A673 (cell line): ENCODE measurements at regions of chr17 and their contacts with region 1.

Region 1: DNA sequence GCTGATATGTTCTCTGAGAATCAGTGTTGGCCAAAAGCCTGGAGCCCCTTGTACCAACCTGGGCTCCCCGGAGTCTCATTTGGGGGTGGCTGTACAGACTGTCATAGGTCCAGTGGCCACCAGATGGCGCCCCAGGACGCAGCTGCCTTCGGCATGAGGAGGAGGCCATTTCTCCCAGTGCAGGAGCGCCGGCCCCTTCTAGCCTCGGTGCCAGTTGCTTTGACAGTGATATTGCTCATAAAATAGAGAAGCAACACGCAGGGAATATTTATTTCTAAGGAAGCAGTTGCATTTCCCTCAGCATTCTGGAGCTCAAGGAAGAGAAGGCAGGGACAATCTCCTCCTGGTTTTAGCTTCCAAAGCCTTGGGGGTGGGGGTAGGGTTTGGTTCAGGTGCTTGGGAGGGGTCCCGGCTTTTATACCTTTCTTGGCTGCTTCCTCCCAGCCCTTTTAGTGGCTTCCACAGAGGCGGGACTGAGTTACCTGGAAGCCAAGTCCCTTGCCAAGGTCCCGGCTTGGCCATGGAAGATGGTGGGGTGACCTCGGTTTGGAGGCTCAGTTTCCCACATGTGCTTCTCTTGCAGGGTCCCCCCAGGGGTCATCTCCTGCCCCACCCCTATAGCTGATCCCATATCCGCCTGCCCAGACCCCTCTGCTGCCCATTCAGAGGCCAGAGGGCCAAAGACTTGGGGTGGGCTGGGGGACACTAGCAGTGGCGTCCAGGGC is 117.8 kb upstream of the CDC42EP4 start:
- DNase-seq: peak; percentile 87
- H3K4me3 ChIP-seq: no peak overlapping the region
- H3K27ac ChIP-seq: no peak overlapping the region
- H3K4me1 ChIP-seq: peaks cover 15% of the 10 kb centered on the region
- H3K27me3 ChIP-seq: no peaks in the 10 kb centered on the region
- CTCF ChIP-seq: peak; percentile 97

Region 2: DNA sequence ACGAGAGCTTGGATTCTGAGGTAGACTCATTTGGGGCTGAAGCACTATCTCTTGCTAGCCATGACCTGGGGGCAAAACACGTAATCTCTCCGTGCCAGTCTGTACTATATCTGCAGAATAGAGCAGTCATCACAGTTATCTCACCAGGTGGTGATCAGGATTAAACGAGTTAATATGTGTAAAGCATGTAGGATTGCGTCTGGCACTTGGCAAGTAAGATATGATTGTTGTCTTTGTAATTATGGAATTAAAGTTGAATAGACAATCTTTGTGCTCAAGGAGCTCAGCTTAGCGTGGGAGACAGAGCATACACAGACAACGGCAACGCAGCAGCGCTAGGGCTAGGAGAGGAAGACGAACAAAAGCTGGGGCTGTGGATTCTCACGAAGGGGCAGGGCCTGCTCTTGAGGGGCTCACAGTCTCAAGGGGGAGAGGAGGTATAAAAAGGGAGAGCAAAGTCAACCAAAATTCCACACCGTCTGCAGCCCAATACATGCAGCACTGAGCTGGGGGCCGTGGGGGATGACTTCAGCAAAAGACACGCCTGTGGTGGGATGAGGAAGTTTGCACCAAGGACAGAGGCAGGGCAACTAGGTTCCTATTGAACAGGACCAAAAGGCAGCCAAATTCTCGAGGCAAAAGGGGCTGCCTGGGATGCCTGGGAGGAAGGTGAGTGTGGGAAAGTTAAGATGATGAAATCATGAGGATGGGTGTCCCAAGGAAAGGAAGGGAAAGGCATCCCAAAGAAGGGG is 146.0 kb after region 1 on chr17:
- CTCF ChIA-PET with region 1: no interaction called
- POLR2A ChIA-PET with region 1: no interaction called
- intact Hi-C with region 1: loop called (anchors 10 kb)
- DNase-seq: peak; percentile 36
- H3K4me3 ChIP-seq: no peak overlapping the region
- H3K27ac ChIP-seq: no peak overlapping the region
- H3K4me1 ChIP-seq: no peaks in the 10 kb centered on the region
- H3K27me3 ChIP-seq: peaks cover 21% of the 10 kb centered on the region
- CTCF ChIP-seq: no peak

Region 3: DNA sequence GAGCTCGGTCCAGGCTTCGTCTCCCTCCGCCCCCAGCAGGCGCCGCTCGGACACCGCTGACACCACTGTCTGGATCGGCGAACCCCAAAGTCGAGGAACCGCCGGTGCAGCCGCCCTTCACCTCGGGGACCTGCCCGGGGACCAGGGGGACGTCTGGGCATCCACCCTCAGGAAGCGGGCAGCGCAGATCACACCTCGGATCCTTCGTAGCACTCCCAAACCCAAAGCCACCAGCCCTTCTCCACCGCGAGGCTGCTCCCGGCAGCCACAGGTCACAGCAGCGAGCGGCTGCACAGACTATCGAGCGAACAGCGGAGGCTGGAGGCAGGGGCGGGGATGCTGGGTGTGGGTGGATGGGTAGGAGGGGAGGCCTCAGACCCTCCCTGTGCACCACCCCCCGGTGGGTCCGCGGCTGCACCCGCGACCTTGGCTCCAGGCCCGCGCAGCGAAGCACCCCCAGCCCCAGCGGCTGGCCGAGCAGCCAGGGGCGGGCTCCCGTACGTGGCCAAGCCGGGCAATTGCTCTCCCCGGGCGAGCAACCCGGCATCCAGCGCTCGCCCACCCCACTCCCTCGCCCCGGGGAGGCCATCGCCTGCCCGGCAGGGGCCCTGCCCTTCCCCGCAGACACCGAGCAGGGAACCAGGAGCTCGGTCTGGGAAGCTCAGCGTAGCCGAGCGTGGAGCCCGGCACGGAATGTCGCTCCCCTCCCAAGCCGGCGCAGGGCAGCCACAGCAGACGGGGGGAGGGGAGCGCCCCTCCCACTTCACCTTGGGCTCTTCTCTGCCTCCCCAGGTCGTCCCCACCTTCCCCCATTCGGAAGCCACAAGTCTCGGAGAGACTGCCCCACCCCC is 213.6 kb after region 1 on chr17:
- CTCF ChIA-PET with region 1: interaction called, 3 read pairs
- POLR2A ChIA-PET with region 1: no interaction called
- intact Hi-C with region 1: loop called (anchors 5 kb)
- DNase-seq: peak; percentile 21
- H3K4me3 ChIP-seq: peak overlapping the region; percentile 46
- H3K27ac ChIP-seq: no peak overlapping the region
- H3K4me1 ChIP-seq: peaks cover 32% of the 10 kb centered on the region
- H3K27me3 ChIP-seq: peaks cover 66% of the 10 kb centered on the region
- CTCF ChIP-seq: no peak

Region 4: GRCh38 chr17:73710095-73710592 is 280.5 kb after region 1 on chr17:
- CTCF ChIA-PET with region 1: no interaction called
- POLR2A ChIA-PET with region 1: no interaction called
- intact Hi-C with region 1: loop called (anchors 1 kb)
- DNase-seq: peak; percentile 80
- H3K4me3 ChIP-seq: no peak overlapping the region
- H3K27ac ChIP-seq: no peak overlapping the region
- H3K4me1 ChIP-seq: no peaks in the 10 kb centered on the region
- H3K27me3 ChIP-seq: peaks cover 53% of the 10 kb centered on the region
- CTCF ChIP-seq: peak; percentile 76

Region 5: GRCh38 chr17:73956669-73957465 is 527.3 kb after region 1 on chr17:
- CTCF ChIA-PET with region 1: no interaction called
- POLR2A ChIA-PET with region 1: no interaction called
- intact Hi-C with region 1: loop called (anchors 1 kb)
- DNase-seq: peak; percentile 77
- H3K4me3 ChIP-seq: no peak overlapping the region
- H3K27ac ChIP-seq: no peak overlapping the region
- H3K4me1 ChIP-seq: peaks cover 9% of the 10 kb centered on the region
- H3K27me3 ChIP-seq: no peaks in the 10 kb centered on the region
- CTCF ChIP-seq: peak; percentile 76